ENCODE measurements at regions of chrX and their contacts with region 1.

Region 1: GRCh38 chrX:102659790-102660757 is 8.8 kb downstream of the GPRASP1 start:
- DNase-seq: peak; percentile 76 to 77
- H3K4me3 ChIP-seq: peak overlapping the region; percentile 49
- H3K4me3 Mint-ChIP-seq: peak overlapping the region; percentile 86
- H3K27ac Mint-ChIP-seq: peak overlapping the region; percentile 72
- H3K4me1 ChIP-seq: no peaks in the 10 kb centered on the region
- H3K4me1 Mint-ChIP-seq: no peaks in the 10 kb centered on the region
- H3K27me3 ChIP-seq: no peaks in the 10 kb centered on the region
- H3K27me3 Mint-ChIP-seq: no peaks in the 10 kb centered on the region
- CTCF ChIP-seq: no peak

Region 2: DNA sequence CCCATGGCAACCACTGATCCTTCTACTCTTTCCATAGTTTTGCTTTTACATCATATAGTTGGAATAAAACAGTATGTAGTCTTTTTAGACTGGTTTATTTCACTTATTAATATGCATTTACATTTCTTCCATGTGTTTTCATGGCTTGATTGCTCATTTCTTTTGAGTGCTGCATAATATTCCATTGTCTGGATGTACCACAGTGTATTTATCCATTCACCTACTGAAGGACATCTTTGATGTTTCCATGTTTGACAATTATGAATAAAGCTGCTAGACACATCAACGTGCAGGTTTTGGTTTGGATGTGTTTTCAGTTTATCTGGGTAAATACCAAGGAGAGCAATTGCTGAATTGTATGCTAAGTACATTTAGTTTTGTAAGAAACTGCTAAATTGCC is 22.5 kb before region 1 on chrX:
- CTCF ChIA-PET with region 1: no interaction called
- POLR2A ChIA-PET with region 1: no interaction called
- intact Hi-C with region 1: no loop called
- DNase-seq: no peak
- H3K4me3 ChIP-seq: no peak overlapping the region
- H3K4me3 Mint-ChIP-seq: no peak overlapping the region
- H3K27ac Mint-ChIP-seq: no peak overlapping the region
- H3K4me1 ChIP-seq: no peaks in the 10 kb centered on the region
- H3K4me1 Mint-ChIP-seq: no peaks in the 10 kb centered on the region
- H3K27me3 ChIP-seq: no peaks in the 10 kb centered on the region
- H3K27me3 Mint-ChIP-seq: no peaks in the 10 kb centered on the region
- CTCF ChIP-seq: no peak

Region 3: DNA sequence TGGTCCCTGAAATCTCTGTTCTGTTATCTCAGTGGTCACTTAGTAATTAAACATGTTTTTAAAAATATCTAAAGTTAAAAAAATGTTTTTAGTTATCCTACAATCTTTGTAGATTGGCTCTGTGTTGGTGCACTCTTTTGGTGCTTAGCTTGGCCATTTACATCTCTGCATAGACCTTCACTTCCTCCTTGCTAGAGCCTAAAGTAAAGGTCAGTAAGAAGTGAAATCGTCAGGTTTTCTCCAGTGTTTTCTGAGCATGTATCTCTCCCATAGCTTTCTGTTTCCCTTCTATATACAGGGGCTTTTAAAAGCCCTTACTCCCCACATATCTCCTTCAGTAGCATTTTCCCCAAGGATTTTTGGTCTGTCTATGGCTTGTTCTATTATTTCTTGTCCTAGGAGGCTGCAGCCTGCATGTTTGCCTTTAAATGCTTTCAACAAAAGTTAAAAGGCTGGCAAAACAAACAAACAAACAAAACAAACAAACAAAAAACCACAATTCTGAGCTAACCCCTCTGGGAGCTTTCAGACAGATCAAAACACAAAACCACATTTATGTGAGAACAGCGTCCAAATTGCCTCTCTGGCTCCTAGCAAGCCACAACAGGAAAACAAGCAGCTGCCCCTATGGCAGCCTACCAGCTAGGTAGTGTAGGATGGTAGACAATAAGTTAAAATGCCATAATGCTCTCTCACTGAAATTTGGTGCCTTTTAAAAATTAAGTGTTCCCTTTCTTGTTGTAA is 24.9 kb after region 1 on chrX:
- CTCF ChIA-PET with region 1: no interaction called
- POLR2A ChIA-PET with region 1: no interaction called
- intact Hi-C with region 1: no loop called
- DNase-seq: no peak
- H3K4me3 ChIP-seq: no peak overlapping the region
- H3K4me3 Mint-ChIP-seq: no peak overlapping the region
- H3K27ac Mint-ChIP-seq: no peak overlapping the region
- H3K4me1 ChIP-seq: no peaks in the 10 kb centered on the region
- H3K4me1 Mint-ChIP-seq: no peaks in the 10 kb centered on the region
- H3K27me3 ChIP-seq: no peaks in the 10 kb centered on the region
- H3K27me3 Mint-ChIP-seq: no peaks in the 10 kb centered on the region
- CTCF ChIP-seq: no peak

Region 4: DNA sequence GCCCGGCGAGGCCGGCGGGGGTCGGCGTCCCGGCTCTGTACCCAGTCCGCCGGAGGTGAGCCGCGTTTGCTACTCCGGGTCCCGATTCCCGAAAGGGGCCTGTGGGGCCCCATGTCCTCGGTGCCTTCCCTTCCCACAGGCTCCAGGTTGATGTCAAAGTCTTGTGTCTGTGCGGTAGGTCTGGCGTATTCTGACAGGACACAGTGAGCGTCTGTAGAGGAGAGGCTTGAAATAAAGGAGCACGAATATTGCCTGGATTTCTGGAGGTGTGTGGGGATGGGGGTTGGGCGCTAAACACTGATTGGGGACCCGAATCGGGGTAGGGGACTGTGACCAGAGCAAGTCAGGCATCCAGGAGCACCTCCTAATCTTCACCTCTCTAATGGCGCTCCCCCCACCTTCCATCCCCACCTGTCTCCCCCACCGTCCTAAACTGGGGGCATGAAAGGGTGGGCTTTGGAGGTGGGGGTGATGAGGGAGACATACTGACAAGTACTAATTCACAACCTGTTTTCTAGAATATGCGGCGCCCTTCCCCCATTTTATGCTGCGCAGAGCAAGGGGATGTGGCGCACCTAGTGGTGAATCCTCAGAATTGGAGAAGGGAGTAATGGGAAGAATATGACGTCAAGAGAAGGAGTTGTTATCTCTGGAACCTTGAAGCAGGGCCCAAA is 53.0 kb after region 1 on chrX:
- CTCF ChIA-PET with region 1: interaction called, 3 read pairs
- POLR2A ChIA-PET with region 1: no interaction called
- intact Hi-C with region 1: loop called (anchors 5 kb)
- DNase-seq: peak; percentile 25 to 37
- H3K4me3 ChIP-seq: peak overlapping the region; percentile 40
- H3K4me3 Mint-ChIP-seq: peak overlapping the region; percentile 82
- H3K27ac Mint-ChIP-seq: no peak overlapping the region
- H3K4me1 ChIP-seq: no peaks in the 10 kb centered on the region
- H3K4me1 Mint-ChIP-seq: no peaks in the 10 kb centered on the region
- H3K27me3 ChIP-seq: no peaks in the 10 kb centered on the region
- H3K27me3 Mint-ChIP-seq: no peaks in the 10 kb centered on the region
- CTCF ChIP-seq: peak; percentile 38 to 46

Region 5: GRCh38 chrX:102768987-102769761 is 109.1 kb after region 1 on chrX:
- CTCF ChIA-PET with region 1: no interaction called
- POLR2A ChIA-PET with region 1: no interaction called
- intact Hi-C with region 1: loop called (anchors 2 kb)
- DNase-seq: peak; percentile 85 to 89
- H3K4me3 ChIP-seq: peak overlapping the region; percentile 59
- H3K4me3 Mint-ChIP-seq: peak overlapping the region; percentile 88
- H3K27ac Mint-ChIP-seq: peak overlapping the region; percentile 99
- H3K4me1 ChIP-seq: no peaks in the 10 kb centered on the region
- H3K4me1 Mint-ChIP-seq: no peaks in the 10 kb centered on the region
- H3K27me3 ChIP-seq: no peaks in the 10 kb centered on the region
- H3K27me3 Mint-ChIP-seq: no peaks in the 10 kb centered on the region
- CTCF ChIP-seq: no peak

Measured in Caco-2 (cell line).